Naive thymus-derived CD4-positive, alpha-beta T cell (primary cell): ENCODE measurements at regions of chr17 and their contacts with region 1.

Region 1: GRCh38 chr17:62968445-62968923 is 2.4 kb downstream of the TANC2 start:
- DNase-seq: peak in 8 of 9 donors; percentile 30 to 81 (median 73)
- ATAC-seq: peak; percentile 63
- H3K4me3 ChIP-seq: no peak overlapping the region
- H3K4me3 Mint-ChIP-seq: peak overlapping the region; percentile 38 to 75 (median 64)
- H3K27ac ChIP-seq: no peak overlapping the region
- H3K27ac Mint-ChIP-seq: peak overlapping the region in 4 of 9 donors; percentile 14 to 65 (median 24)
- H3K4me1 ChIP-seq: peaks cover 14 to 15% of the 10 kb centered on the region in 2 donors
- H3K4me1 Mint-ChIP-seq: peaks cover 24 to 42% (median 30%) of the 10 kb centered on the region in 7 donors
- H3K27me3 ChIP-seq: no peaks in the 10 kb centered on the region
- H3K27me3 Mint-ChIP-seq: peaks cover 0 to 56% (median 0%) of the 10 kb centered on the region in 5 donors

Region 2: GRCh38 chr17:61862975-61863800 is 1105.3 kb before region 1 on chr17 and contains the start of gene BRIP1:
- CTCF ChIA-PET with region 1: no interaction called
- POLR2A ChIA-PET with region 1: no interaction called
- intact Hi-C with region 1: loop called in 1 of 2 experiments (anchors 10 kb)
- DNase-seq: peak; percentile 61 to 90 (median 85)
- ATAC-seq: peak; percentile 99
- H3K4me3 ChIP-seq: peak within 1 kb of the TSS; percentile 88
- H3K4me3 Mint-ChIP-seq: peak within 1 kb of the TSS; percentile 88 to 98 (median 96)
- H3K27ac ChIP-seq: peak within 1 kb of the TSS; percentile 70
- H3K27ac Mint-ChIP-seq: peak within 1 kb of the TSS; percentile 86 to 97 (median 93)
- H3K4me1 ChIP-seq: peaks cover 5 to 11% of the 10 kb centered on the region in 2 donors
- H3K4me1 Mint-ChIP-seq: peaks cover 8 to 36% (median 26%) of the 10 kb centered on the region in 7 donors
- H3K27me3 ChIP-seq: no peaks in the 10 kb centered on the region
- H3K27me3 Mint-ChIP-seq: no peaks in the 10 kb centered on the region
- total RNA-seq, gene BRIP1: 1.6 to 19.9 (median 1.8) TPM

Region 3: GRCh38 chr17:62405451-62405850 is 563.0 kb before region 1 on chr17:
- CTCF ChIA-PET with region 1: no interaction called
- POLR2A ChIA-PET with region 1: no interaction called
- intact Hi-C with region 1: no loop called
- DNase-seq: no peak
- ATAC-seq: no peak
- H3K4me3 ChIP-seq: no peak overlapping the region
- H3K4me3 Mint-ChIP-seq: no peak overlapping the region
- H3K27ac ChIP-seq: no peak overlapping the region
- H3K27ac Mint-ChIP-seq: no peak overlapping the region
- H3K4me1 ChIP-seq: no peaks in the 10 kb centered on the region
- H3K4me1 Mint-ChIP-seq: no peaks in the 10 kb centered on the region
- H3K27me3 ChIP-seq: peaks cover 0 to 4% of the 10 kb centered on the region in 2 donors
- H3K27me3 Mint-ChIP-seq: peaks cover 17 to 34% (median 27%) of the 10 kb centered on the region in 5 donors

Region 4: GRCh38 chr17:62478433-62478879 is 490.0 kb before region 1 on chr17 and contains the start of gene TLK2:
- CTCF ChIA-PET with region 1: no interaction called
- POLR2A ChIA-PET with region 1: no interaction called
- intact Hi-C with region 1: loop called in 1 of 2 experiments (anchors 2 kb)
- DNase-seq: peak in 7 of 9 donors; percentile 61 to 84 (median 74)
- ATAC-seq: peak; percentile 88
- H3K4me3 ChIP-seq: peak within 1 kb of the TSS; percentile 53
- H3K4me3 Mint-ChIP-seq: peak within 1 kb of the TSS; percentile 87 to 95 (median 92)
- H3K27ac ChIP-seq: peak within 1 kb of the TSS; percentile 90
- H3K27ac Mint-ChIP-seq: peak within 1 kb of the TSS; percentile 90 to 98 (median 94)
- H3K4me1 ChIP-seq: peaks cover 5 to 8% of the 10 kb centered on the region in 2 donors
- H3K4me1 Mint-ChIP-seq: peaks cover 22 to 48% (median 40%) of the 10 kb centered on the region in 7 donors
- H3K27me3 ChIP-seq: no peaks in the 10 kb centered on the region
- H3K27me3 Mint-ChIP-seq: no peaks in the 10 kb centered on the region
- total RNA-seq, gene TLK2: 48.1 to 84.8 (median 68.6) TPM

Region 5: GRCh38 chr17:62703775-62704378 is 264.6 kb before region 1 on chr17:
- CTCF ChIA-PET with region 1: interaction called, 3 read pairs
- POLR2A ChIA-PET with region 1: no interaction called
- intact Hi-C with region 1: loop called (anchors 1 kb)
- DNase-seq: peak; percentile 31 to 81 (median 71)
- ATAC-seq: peak; percentile 96
- H3K4me3 ChIP-seq: peak overlapping the region; percentile 43
- H3K4me3 Mint-ChIP-seq: peak overlapping the region in 8 of 10 donors; percentile 25 to 77 (median 51)
- H3K27ac ChIP-seq: no peak overlapping the region
- H3K27ac Mint-ChIP-seq: no peak overlapping the region
- H3K4me1 ChIP-seq: peaks cover 5 to 9% of the 10 kb centered on the region in 2 donors
- H3K4me1 Mint-ChIP-seq: peaks cover 0 to 7% (median 4%) of the 10 kb centered on the region in 7 donors
- H3K27me3 ChIP-seq: no peaks in the 10 kb centered on the region
- H3K27me3 Mint-ChIP-seq: peaks cover 0 to 39% (median 6%) of the 10 kb centered on the region in 5 donors

Region 6: DNA sequence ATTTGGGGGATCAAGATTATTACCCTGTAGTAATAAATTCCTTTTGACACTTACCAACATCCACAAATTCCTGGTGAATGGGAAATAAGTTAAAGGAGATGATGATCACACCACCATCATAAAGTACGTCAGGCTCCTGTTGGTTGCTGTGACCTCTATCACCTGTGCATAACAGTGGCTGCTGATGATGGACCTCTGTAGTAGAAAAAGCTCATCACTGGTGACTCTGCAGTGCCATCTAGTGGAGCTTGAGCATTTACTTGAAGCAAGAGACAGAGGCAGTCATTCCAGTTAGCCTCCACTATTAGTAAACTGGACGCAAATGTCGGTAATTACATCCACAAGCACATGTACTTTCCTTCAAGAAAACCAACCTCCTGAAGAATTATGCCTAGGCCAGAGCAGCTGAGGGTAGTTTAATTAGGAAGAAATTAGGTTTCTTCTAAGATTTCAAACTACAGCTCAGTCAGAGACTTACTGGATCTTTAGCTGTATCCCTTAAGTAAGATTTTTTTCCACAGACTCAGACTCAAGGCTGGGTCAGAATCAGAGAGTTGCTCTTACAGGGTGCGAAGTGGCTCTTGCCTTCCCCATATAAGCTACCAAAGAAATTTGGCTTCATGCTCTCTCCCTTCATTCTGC is 438.3 kb after region 1 on chr17:
- CTCF ChIA-PET with region 1: no interaction called
- POLR2A ChIA-PET with region 1: no interaction called
- intact Hi-C with region 1: loop called in 1 of 2 experiments (anchors 1 kb)
- DNase-seq: peak in 8 of 9 donors; percentile 40 to 70 (median 60)
- ATAC-seq: peak; percentile 90
- H3K4me3 ChIP-seq: no peak overlapping the region
- H3K4me3 Mint-ChIP-seq: no peak overlapping the region
- H3K27ac ChIP-seq: no peak overlapping the region
- H3K27ac Mint-ChIP-seq: no peak overlapping the region
- H3K4me1 ChIP-seq: no peaks in the 10 kb centered on the region
- H3K4me1 Mint-ChIP-seq: peaks cover 0 to 6% (median 4%) of the 10 kb centered on the region in 7 donors
- H3K27me3 ChIP-seq: no peaks in the 10 kb centered on the region
- H3K27me3 Mint-ChIP-seq: peaks cover 0 to 25% (median 0%) of the 10 kb centered on the region in 5 donors